ENCODE measurements at regions of chr19 and their contacts with region 1.

Region 1: GRCh38 chr19:13554506-13555240 is 48.4 kb upstream of the CACNA1A start:
- DNase-seq: no peak
- H3K4me3 ChIP-seq: no peak overlapping the region
- CTCF ChIP-seq: no peak

Region 2: DNA sequence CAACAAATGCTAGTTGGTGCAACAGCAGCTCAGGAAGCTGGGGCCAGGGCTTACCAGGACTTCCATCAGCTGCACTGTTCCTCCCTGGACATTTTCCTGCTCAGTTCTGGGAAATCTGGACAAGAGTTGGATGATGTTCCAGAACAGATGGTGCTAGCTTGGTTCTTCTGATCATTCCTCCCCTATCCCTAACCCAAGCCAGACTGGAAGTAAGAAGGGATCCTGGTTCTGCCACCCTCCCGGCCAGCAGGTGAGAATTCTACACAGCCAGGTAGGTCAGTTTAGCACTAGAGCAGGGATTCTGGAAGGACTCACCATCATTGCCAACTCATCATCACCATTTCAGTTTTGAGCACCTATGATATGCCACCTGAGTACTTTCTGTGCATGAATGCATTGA is 78.6 kb before region 1 on chr19:
- in situ Hi-C with region 1: loop called (anchors 5 kb)
- DNase-seq: no peak
- H3K4me3 ChIP-seq: no peak overlapping the region
- CTCF ChIP-seq: no peak

Region 3: DNA sequence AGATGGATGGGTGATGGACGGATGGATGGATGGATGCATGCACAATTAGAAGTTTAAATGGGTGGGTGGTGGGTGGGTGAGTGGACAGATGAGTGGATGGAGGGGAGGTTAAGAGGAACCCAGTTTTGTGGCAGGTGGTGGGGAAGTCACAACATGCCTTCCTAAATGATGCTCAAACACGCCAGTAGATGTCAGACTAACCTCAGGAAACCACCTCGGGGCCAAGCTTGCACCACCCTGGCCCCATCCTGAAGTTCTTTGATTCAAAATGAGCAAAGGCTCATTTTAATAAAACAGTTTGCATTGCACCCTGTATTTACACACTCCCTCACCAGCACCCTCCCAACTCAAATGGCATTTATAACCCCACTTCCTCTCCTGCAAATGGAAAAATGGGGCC is 43.0 kb after region 1 on chr19:
- in situ Hi-C with region 1: no loop called
- DNase-seq: peak; percentile 46
- H3K4me3 ChIP-seq: no peak overlapping the region
- CTCF ChIP-seq: peak; percentile 65

Measured in astrocyte of the cerebellum (primary cell).